Heart left ventricle (tissue), 16 donors: ENCODE measurements at regions of chr1 and their contacts with region 1.

Region 1: DNA sequence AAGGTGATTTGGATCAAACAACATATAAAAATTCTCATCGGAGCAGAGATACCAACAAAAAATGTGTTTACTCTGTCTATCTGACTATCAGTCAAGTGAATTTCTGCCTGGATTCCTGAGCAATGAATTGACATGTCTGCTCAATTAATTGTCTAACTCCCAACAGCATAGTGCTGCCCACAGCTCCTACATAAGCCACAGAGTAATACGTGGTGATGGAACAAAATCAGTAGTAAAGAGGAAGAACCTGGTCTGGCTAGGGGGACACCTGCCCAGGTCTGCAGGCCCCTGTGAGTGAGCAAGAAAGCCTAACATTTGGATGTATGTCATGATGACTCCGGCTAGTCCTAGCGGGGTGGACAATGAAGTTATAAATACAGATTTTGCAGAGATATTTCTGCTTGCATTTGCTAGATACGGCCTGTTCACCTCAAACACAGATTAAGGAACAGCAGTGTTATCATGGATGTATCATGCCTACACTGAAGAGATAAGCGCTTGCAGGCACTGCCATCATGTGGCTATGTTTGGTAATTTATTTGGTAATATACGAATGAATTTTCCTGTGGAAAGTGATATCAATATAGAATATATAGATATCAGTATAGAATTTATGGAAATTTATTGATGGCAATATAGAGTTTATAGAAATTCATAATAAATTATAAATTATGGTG is 69.6 kb upstream of the LRRC8B start:
- DNase-seq: peak in 3 of 5 donors; percentile 20 to 32 (median 24)
- ATAC-seq: no peak
- H3K4me3 ChIP-seq: no peak overlapping the region
- H3K27ac ChIP-seq: no peak overlapping the region
- H3K4me1 ChIP-seq: no peaks in the 10 kb centered on the region
- H3K27me3 ChIP-seq: no peaks in the 10 kb centered on the region
- CTCF ChIP-seq: peak; percentile 49 to 80 (median 64)
- POLR2A ChIP-seq: no peak

Region 2: GRCh38 chr1:88973520-88974137 is 481.4 kb before region 1 on chr1:
- intact Hi-C with region 1: loop called in 1 of 10 experiments (anchors 10 kb)
- DNase-seq: no peak
- ATAC-seq: no peak
- H3K4me3 ChIP-seq: no peak overlapping the region
- H3K27ac ChIP-seq: no peak overlapping the region
- H3K4me1 ChIP-seq: peaks cover 0 to 17% (median 0%) of the 10 kb centered on the region in 12 donors
- H3K27me3 ChIP-seq: no peaks in the 10 kb centered on the region
- CTCF ChIP-seq: peak; percentile 46 to 72 (median 59)
- POLR2A ChIP-seq: no peak

Region 3: GRCh38 chr1:88983791-88984559 is 471.0 kb before region 1 on chr1:
- intact Hi-C with region 1: loop called in 2 of 10 experiments (anchors 5 to 10 kb)
- DNase-seq: peak in 1 of 5 donors; percentile 32
- ATAC-seq: peak in 2 of 4 donors; percentile 57 to 66
- H3K4me3 ChIP-seq: peak overlapping the region in 8 of 12 donors; percentile 18 to 51 (median 34)
- H3K27ac ChIP-seq: peak overlapping the region in 10 of 12 donors; percentile 5 to 61 (median 53)
- H3K4me1 ChIP-seq: peaks cover 0 to 72% (median 26%) of the 10 kb centered on the region in 12 donors
- H3K27me3 ChIP-seq: no peaks in the 10 kb centered on the region
- CTCF ChIP-seq: peak; percentile 48 to 70 (median 61)
- POLR2A ChIP-seq: no peak

Region 4: GRCh38 chr1:88998716-88999115 is 456.3 kb before region 1 on chr1:
- intact Hi-C with region 1: loop called in 9 of 10 experiments (anchors 1 to 5 kb)
- DNase-seq: no peak
- ATAC-seq: peak; percentile 71 to 92 (median 88)
- H3K4me3 ChIP-seq: no peak overlapping the region
- H3K27ac ChIP-seq: no peak overlapping the region
- H3K4me1 ChIP-seq: peaks cover 0 to 4% (median 2%) of the 10 kb centered on the region in 12 donors
- H3K27me3 ChIP-seq: no peaks in the 10 kb centered on the region
- CTCF ChIP-seq: peak; percentile 47 to 72 (median 64)
- POLR2A ChIP-seq: no peak

Region 5: DNA sequence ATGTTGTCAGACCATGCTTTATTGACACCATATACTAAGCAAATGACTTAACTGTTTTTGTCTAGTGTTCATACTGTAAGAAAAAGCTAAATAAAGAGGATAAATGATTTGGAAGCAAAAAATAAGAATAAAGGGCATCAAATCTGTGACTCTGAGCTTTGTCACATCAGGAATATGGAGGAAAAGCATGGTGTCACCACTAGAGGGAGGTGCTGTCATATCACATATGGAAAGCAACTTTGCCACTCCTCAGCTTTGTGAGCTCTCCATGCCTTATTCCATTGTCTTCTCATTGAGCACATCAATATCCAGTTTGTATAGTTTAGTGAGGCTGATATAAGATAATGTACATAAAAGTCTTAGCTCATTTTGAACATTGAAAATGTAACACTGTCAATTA is 369.2 kb before region 1 on chr1:
- intact Hi-C with region 1: loop called in 7 of 10 experiments (anchors 2 to 10 kb)
- DNase-seq: peak in 1 of 5 donors; percentile 42
- ATAC-seq: peak in 3 of 4 donors; percentile 41 to 76 (median 52)
- H3K4me3 ChIP-seq: no peak overlapping the region
- H3K27ac ChIP-seq: no peak overlapping the region
- H3K4me1 ChIP-seq: peaks cover 0 to 12% (median 0%) of the 10 kb centered on the region in 12 donors
- H3K27me3 ChIP-seq: no peaks in the 10 kb centered on the region
- CTCF ChIP-seq: peak in 10 of 12 donors; percentile 53 to 90 (median 76)
- POLR2A ChIP-seq: no peak

Region 6: GRCh38 chr1:89221341-89221740 is 233.6 kb before region 1 on chr1:
- intact Hi-C with region 1: no loop called
- DNase-seq: no peak
- ATAC-seq: no peak
- H3K4me3 ChIP-seq: no peak overlapping the region
- H3K27ac ChIP-seq: no peak overlapping the region
- H3K4me1 ChIP-seq: no peaks in the 10 kb centered on the region
- H3K27me3 ChIP-seq: no peaks in the 10 kb centered on the region
- CTCF ChIP-seq: no peak
- POLR2A ChIP-seq: no peak

Region 7: GRCh38 chr1:89499320-89499719 is 44.3 kb after region 1 on chr1:
- intact Hi-C with region 1: no loop called
- DNase-seq: no peak
- ATAC-seq: no peak
- H3K4me3 ChIP-seq: no peak overlapping the region
- H3K27ac ChIP-seq: no peak overlapping the region
- H3K4me1 ChIP-seq: no peaks in the 10 kb centered on the region
- H3K27me3 ChIP-seq: no peaks in the 10 kb centered on the region
- CTCF ChIP-seq: no peak
- POLR2A ChIP-seq: no peak